Vagina (tissue), 2 donors: ENCODE measurements at regions of chr17 and their contacts with region 1.

Region 1: GRCh38 chr17:81044764-81045589 is 10.0 kb downstream of the BAIAP2 start:
- DNase-seq: no peak
- H3K4me3 ChIP-seq: no peak overlapping the region
- H3K27ac ChIP-seq: peak overlapping the region; percentile 67
- H3K4me1 ChIP-seq: peaks cover 82% of the 10 kb centered on the region
- H3K27me3 ChIP-seq: no peaks in the 10 kb centered on the region
- CTCF ChIP-seq: no peak
- POLR2A ChIP-seq: no peak

Region 2: DNA sequence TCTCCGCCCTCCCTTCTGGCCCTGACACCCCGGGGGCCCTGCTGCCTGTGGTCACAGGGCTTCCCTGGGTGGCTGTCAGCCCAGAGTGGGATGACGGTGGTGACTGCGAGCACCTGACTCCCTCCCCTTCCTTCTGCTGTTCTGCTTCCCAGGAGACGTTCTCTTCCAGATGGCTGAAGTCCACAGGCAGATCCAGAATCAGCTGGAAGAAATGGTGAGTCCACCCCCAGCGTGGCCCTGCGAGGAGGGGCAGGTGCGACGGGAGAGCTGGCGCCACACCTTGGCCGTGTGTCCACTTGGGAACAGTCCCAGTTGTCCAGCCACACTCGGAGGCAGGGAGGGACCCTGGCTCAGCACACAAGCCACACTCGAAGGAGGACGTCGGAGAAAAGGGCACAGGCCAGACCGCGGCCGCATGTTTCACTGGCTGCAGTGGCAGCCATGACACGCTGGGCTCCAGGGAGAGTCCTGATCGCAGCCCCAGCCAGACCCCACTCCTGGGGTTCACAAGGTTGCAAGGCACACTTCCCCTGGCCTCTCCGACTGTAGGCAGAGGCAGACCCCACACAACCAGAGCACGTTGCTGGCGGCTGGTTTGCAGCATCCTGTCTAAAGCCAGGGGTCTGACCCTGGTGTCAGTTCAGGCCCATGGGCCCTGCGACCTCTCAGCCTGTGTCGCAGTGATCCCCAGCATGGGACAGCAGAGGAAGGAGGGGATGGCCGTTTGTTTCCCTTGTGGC is 39.9 kb after region 1 on chr17:
- intact Hi-C with region 1: loop called (anchors 5 kb)
- DNase-seq: no peak
- H3K4me3 ChIP-seq: no peak overlapping the region
- H3K27ac ChIP-seq: peak overlapping the region; percentile 60
- H3K4me1 ChIP-seq: peaks cover 55% of the 10 kb centered on the region
- H3K27me3 ChIP-seq: no peaks in the 10 kb centered on the region
- CTCF ChIP-seq: no peak
- POLR2A ChIP-seq: no peak

Region 3: GRCh38 chr17:81101614-81102306 is 56.8 kb after region 1 on chr17:
- intact Hi-C with region 1: no loop called
- DNase-seq: no peak
- H3K4me3 ChIP-seq: no peak overlapping the region
- H3K27ac ChIP-seq: no peak overlapping the region
- H3K4me1 ChIP-seq: peaks cover 18% of the 10 kb centered on the region
- H3K27me3 ChIP-seq: no peaks in the 10 kb centered on the region
- CTCF ChIP-seq: peak; percentile 95 to 99 (median 99)
- POLR2A ChIP-seq: no peak